ENCODE measurements at regions of chr18 and their contacts with region 1.

Region 1: GRCh38 chr18:47930931-47931717 is 665 bp upstream of the SMAD2 start:
- DNase-seq: peak; percentile 94
- H3K4me3 Mint-ChIP-seq: peak overlapping the region; percentile 82
- H3K27ac Mint-ChIP-seq: peak overlapping the region; percentile 89
- H3K4me1 Mint-ChIP-seq: peaks cover 39% of the 10 kb centered on the region
- H3K27me3 Mint-ChIP-seq: peaks cover 7% of the 10 kb centered on the region

Region 2: DNA sequence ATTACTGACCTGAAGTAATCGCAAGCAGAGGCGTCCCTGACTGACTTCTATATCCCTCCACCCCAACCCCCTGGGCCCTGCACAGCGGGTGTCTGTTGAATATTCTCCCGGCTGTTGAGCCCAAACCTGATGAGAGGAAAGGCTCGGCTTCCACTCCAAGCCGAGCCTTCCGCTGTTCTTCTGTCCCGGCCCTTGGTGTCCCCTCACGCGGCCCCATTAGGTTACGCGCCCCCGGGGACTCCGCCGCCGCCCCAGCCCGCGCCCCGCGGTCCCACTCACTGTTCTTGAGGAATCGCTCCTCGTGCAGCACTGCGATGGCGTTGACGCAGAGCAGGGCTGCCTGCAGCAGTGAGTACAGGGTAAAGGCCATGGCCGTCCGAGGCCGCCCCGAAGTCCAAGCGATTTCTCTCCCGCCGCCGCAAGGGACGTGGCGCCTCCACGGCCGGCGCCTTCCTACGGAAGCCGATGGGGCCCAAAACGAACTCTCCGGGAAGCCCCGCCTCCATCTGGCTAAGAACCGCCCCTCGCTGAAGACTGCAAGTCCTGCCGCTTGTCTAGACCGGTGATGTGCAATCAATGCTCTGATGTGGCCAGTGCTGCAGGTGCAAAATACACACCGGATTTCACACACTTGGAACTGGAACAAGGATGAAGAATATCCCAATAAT is 755.1 kb before region 1 on chr18 and contains the start of gene IER3IP1:
- intact Hi-C with region 1: loop called (anchors 10 kb)
- DNase-seq: peak; percentile 85
- H3K4me3 Mint-ChIP-seq: peak within 1 kb of the TSS; percentile 57
- H3K27ac Mint-ChIP-seq: peak within 1 kb of the TSS; percentile 69
- H3K4me1 Mint-ChIP-seq: no peaks in the 10 kb centered on the region
- H3K27me3 Mint-ChIP-seq: peaks cover 3% of the 10 kb centered on the region
- total RNA-seq, gene IER3IP1: 14.7 and 16.3 TPM in 2 replicates

Region 3: DNA sequence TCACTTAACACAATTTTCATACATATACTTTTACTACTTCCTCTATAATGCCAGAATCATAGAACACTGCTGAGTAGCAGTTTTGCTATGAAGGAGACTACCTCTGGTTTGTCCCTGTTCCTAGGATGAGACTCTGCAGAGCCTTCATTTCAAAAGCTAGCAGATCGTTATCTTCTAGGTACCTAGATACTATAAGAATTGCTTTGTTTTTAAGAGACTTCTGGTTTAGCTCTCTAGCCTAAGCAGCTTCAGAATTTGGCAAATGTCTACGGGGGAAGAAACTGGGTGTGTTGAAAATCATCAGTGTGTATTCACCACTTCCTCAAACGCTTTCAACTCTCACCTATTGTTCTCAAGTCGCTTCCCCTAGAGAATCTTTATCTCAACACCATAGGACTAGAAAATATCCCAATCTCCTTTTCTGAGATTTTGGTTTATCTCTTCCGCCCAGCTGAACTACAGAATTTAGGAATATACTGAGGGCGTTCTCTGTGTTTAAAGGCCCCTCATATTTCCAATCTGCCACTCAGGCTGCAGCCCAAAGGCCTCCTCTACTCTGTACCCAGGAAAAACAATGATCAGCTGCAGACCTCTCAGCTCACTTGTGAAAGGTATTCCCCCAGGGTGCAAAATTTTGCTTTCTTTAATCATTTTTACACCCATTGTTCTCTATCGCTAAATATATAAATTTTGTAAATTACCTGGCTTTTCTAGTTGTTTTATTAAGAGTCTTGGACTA is 29.3 kb before region 1 on chr18:
- intact Hi-C with region 1: loop called (anchors 1 kb)
- DNase-seq: peak; percentile 22
- H3K4me3 Mint-ChIP-seq: peak overlapping the region; percentile 31
- H3K27ac Mint-ChIP-seq: peak overlapping the region; percentile 75
- H3K4me1 Mint-ChIP-seq: peaks cover 89% of the 10 kb centered on the region
- H3K27me3 Mint-ChIP-seq: no peaks in the 10 kb centered on the region

Region 4: GRCh38 chr18:47997338-47997780 is 66.2 kb after region 1 on chr18:
- intact Hi-C with region 1: loop called (anchors 5 kb)
- DNase-seq: no peak
- H3K4me3 Mint-ChIP-seq: no peak overlapping the region
- H3K27ac Mint-ChIP-seq: no peak overlapping the region
- H3K4me1 Mint-ChIP-seq: no peaks in the 10 kb centered on the region
- H3K27me3 Mint-ChIP-seq: peaks cover 7% of the 10 kb centered on the region

Region 5: DNA sequence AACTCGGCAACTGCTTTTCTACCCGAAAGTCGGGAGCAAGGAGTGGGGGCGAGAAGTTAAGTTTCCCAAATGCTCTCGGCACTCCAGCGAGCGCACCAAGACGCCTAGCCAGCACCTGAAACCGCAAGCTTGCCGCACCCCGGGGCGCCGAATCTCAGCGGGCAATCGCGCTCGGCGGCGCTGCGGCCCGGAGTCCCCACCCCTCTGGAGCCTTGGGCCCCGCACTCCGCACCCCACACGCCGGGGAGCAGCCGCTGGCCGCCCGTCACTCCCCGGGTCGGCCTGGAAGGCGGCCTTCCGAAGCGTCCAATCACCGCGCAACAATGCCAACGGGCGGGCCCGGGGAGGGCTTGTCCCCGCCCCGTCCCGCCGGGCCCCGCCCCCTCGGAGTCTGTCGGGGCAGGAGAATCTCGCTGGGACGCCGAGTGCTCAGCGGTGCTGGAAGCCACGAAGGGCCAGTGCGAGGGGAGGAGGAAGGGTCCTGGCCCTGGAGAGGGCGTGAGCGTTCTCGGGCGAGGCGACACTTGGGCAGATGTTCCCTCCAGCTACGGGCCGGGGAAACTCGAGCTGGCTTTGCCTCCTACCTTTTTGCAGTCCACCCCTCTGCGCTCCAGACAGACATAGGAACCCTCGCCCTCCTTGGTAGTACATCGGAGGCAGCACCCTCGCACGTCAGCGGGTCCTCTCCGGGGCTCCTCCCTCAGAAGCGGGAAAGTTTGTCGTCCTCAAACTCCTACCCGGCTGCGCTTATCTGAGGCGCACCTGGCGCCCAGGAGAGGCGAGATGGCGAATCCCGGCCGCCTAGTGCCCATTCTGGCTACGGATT is 479.2 kb after region 1 on chr18:
- intact Hi-C with region 1: loop called (anchors 5 kb)
- DNase-seq: peak; percentile 75
- H3K4me3 Mint-ChIP-seq: peak overlapping the region; percentile 63
- H3K27ac Mint-ChIP-seq: no peak overlapping the region
- H3K4me1 Mint-ChIP-seq: peaks cover 7% of the 10 kb centered on the region
- H3K27me3 Mint-ChIP-seq: peaks cover 71% of the 10 kb centered on the region

Region 6: DNA sequence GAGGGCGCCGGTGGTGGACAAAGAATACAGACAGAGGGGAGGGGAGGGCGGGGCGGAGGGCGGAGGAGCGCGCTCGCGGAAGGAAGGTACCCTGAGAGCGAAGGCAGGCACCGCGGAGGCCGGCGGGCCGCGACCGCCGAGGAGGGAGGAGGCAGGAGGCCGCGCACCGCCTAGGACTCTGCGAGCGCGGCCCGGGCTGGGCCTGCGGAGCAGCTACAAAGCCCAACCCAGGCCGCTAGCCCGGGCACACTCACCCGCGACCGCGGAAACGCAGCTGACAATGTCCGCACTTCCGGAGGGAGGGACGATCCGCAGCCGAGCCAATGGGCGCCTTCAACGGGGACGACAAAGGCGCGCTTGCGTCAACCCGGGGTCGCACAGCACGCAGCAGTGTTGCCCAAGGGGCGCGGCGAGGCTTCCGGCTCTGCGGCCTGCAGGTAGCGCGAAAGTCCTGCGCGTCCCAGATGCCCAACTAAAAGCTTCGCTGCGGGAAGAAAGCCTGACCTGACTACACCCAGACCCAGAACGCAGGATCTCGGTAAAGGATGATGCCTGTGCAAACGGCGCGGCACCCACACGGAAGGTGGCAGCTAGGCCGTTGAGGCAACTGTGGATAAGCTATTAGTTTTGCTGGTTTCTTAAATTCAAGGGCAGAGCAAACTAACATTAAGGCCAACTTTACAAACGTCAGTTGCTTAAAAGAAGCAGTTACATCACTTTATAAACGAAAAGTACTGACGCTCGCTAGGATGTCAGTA is 1556.0 kb after region 1 on chr18 and contains the start of gene C18orf32:
- intact Hi-C with region 1: loop called (anchors 10 kb)
- DNase-seq: peak; percentile 92
- H3K4me3 Mint-ChIP-seq: peak within 1 kb of the TSS; percentile 93
- H3K27ac Mint-ChIP-seq: peak within 1 kb of the TSS; percentile 98
- H3K4me1 Mint-ChIP-seq: peaks cover 53% of the 10 kb centered on the region
- H3K27me3 Mint-ChIP-seq: no peaks in the 10 kb centered on the region
- total RNA-seq, gene C18orf32: 28.7 and 31.2 TPM in 2 replicates

Measured in activated T-helper 1 cell treated with anti-CD3 and anti-CD28 coated beads, Interleukin-12 subunit alpha, Interleukin-12 subunit beta, Interleukin-2, Interleukin-4 antibody, amounts not matched to agents 30 ng/mL and 10 ng/mL and 1 ng/mL, durations not matched to agents 14 hours and 24 hours and 36 hours (primary cell).